ENCODE measurements at regions of chr20 and their contacts with region 1.

Region 1: GRCh38 chr20:50179507-50180016 is 11.1 kb upstream of the CEBPB start:
- DNase-seq: no peak
- H3K4me3 ChIP-seq: no peak overlapping the region
- CTCF ChIP-seq: no peak

Region 2: GRCh38 chr20:49742948-49743347 is 436.6 kb before region 1 on chr20:
- CTCF ChIA-PET with region 1: no interaction called
- POLR2A ChIA-PET with region 1: no interaction called
- DNase-seq: no peak
- H3K4me3 ChIP-seq: no peak overlapping the region
- CTCF ChIP-seq: no peak

Region 3: GRCh38 chr20:49914307-49915089 is 265.1 kb before region 1 on chr20:
- CTCF ChIA-PET with region 1: no interaction called
- POLR2A ChIA-PET with region 1: no interaction called
- DNase-seq: no peak
- H3K4me3 ChIP-seq: peak overlapping the region; percentile 96
- CTCF ChIP-seq: no peak

Region 4: DNA sequence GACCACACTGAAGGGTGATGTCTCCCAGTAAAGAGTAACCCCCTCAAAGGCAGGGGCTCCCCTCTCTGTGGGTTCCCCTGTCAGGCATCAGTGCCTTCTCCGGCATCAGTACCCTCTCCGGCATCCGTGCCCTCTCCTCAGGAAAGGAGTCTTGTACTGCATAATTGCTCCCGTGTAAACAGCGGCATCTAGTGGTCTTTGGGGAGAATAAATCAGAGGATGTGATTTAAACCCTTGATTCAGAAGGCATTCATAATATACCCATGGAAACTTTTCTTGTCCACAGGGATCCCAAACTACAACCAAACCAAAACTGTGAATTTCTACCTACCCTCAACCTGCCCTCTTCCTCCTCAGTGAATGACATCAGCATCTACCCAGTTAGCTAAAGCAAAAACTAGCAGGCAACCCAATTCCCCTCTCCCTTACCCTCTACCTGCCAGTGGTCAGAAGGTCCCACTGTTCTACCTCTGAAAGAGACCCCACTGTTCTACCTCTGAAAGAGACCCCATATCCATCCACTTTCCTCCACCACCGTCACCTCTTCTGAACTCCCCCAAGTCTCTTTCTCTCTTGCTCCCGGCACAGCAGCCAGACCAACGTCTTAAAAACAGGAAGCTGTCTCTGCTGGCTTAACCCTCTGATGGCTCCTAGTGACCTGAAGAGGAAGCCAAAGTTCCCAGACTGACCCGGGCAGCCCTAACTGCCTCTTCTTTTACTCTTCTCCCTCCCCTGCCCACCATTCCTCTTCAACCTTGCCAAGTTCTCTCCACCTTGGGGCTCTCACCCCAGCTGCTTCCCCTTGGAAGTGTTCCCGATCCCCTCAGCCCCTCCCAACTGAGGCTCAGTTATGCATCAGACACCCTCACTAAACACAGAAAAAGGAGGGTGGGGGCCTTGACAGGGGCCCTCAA is 93.9 kb before region 1 on chr20:
- CTCF ChIA-PET with region 1: interaction called, 17 read pairs
- POLR2A ChIA-PET with region 1: no interaction called
- DNase-seq: no peak
- H3K4me3 ChIP-seq: no peak overlapping the region
- CTCF ChIP-seq: peak; percentile 65

Region 5: DNA sequence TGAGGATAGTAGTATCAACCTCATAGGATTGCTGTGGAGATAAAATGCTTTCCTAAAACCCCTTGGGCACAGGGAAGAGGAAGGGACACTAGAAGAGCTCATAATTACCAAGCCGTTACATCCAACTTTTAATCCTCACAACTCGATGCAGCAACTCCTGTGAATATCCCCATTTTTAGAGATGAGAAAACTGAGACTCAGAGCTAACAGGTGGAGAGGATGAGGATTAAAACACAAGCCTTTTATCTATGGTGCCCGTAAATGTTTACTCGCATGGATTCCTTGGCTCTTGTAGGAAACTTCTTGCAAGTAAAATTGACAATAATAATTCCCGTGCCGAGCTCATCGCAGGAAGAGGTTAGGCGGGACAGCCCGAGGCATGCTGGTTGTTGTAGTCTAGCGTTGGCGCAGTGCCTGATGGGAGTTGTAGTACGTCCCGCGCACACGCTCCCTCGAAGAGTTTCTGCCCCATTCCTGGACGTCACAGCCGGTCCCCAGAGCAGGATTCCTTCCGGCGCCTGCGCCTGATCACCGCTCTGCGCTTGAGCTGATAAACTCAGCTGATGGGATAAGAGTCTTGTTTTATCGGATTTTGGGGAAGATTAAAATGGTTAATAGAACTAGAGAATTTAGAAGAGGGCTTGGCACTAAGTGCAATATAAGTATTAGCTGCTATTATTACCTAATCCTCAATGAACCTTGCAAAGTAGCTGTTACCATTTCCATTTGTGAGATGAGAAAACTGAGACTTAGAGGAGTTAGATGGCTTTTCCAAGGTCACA is 63.8 kb before region 1 on chr20:
- CTCF ChIA-PET with region 1: interaction called, 43 read pairs
- POLR2A ChIA-PET with region 1: no interaction called
- DNase-seq: peak; percentile 78
- H3K4me3 ChIP-seq: peak overlapping the region; percentile 55
- CTCF ChIP-seq: no peak

Region 6: GRCh38 chr20:50120897-50121693 is 58.5 kb before region 1 on chr20:
- CTCF ChIA-PET with region 1: interaction called, 43 read pairs
- POLR2A ChIA-PET with region 1: no interaction called
- DNase-seq: no peak
- H3K4me3 ChIP-seq: no peak overlapping the region
- CTCF ChIP-seq: peak; percentile 90

Region 7: DNA sequence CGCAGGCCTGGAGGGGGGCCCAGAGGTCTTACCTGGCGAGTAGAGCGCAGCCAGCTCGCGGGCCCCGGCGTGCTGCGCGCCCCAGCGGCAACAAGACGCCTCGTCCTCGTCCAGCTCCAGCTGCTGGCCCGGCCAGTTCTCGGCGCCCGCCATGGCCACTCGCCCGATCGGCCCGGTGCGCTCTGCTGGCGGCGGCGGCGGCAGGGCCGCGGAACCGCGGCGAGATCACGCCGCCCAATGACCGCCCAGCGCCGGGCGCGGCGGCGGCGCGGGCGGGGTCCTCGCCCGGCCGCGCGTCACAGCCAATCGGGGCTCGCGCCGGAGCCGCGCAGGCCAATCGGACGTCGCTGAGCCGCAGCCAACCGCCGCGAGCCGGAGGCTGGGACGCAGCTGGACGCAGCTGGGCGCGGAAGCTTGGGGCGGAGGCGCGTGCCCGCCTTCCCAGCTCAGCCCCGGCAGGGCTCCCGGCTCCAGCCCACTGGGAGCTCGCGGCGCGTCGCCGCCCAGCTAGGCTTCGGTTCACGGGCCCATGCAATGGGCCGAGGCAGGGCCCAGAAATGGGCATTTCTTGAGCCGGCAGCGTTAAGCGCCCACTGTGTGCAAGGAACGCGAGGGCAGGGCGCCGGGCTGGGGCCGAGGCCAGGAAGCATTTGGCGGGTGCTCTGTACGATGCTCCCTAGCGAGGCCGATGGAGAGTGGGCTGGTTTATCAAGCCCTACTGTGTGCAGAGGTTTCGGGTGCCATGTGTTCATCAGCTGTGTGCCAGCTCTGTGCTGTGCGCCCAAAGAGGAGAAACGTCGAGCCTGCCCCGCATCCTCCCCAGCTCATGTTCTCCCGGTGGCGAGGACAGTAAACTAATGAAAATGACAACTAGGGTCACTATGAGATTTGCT is 25.8 kb before region 1 on chr20 and contains the start of gene PEDS1:
- CTCF ChIA-PET with region 1: interaction called, 16 read pairs
- POLR2A ChIA-PET with region 1: no interaction called
- DNase-seq: no peak
- H3K4me3 ChIP-seq: peak within 1 kb of the TSS; percentile 89
- CTCF ChIP-seq: no peak

Region 8: DNA sequence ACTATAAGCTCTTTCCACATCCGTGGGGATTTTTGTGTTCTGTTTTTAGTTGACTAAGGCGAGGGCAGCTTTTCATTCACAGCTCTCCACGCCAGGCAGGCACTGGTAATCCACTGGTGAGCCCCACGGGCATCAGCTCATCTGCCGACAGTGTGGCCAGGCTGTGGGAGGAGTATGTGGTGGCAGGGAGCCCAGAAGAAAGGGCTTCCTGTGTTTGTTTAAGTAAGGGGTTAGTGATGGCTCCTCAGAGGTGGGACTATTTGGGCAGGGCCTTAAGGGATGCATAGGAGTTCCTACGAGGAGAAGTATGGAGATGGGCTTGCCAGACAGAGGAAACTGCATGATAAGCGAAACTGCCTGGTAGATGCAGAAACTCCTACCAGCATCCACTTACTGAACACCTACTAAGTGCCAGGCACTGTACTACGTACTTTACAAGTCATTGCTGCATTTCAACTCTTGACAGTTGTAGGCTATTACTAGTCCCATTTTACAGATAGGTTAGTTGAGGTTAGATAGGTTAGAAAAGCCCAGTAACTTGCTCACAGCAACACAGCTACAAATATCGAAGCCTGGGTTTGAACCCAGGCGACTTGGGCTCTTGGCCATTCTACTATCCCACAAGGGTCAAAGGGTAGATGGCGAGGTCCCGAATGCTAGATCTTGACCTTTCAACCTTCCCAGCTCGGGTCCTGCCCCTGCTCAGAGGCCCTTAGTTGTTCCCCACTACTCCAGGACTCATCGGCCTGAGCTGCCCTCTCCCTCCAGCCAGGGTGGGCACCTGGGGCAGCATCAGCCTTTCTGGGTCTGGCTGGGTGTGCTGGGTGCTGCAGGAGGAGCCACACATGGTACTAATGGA is 66.2 kb after region 1 on chr20:
- CTCF ChIA-PET with region 1: no interaction called
- POLR2A ChIA-PET with region 1: no interaction called
- DNase-seq: no peak
- H3K4me3 ChIP-seq: no peak overlapping the region
- CTCF ChIP-seq: no peak

Measured in AG04449 (cell line).